ENCODE measurements at regions of chr15 and their contacts with region 1.

Region 1: DNA sequence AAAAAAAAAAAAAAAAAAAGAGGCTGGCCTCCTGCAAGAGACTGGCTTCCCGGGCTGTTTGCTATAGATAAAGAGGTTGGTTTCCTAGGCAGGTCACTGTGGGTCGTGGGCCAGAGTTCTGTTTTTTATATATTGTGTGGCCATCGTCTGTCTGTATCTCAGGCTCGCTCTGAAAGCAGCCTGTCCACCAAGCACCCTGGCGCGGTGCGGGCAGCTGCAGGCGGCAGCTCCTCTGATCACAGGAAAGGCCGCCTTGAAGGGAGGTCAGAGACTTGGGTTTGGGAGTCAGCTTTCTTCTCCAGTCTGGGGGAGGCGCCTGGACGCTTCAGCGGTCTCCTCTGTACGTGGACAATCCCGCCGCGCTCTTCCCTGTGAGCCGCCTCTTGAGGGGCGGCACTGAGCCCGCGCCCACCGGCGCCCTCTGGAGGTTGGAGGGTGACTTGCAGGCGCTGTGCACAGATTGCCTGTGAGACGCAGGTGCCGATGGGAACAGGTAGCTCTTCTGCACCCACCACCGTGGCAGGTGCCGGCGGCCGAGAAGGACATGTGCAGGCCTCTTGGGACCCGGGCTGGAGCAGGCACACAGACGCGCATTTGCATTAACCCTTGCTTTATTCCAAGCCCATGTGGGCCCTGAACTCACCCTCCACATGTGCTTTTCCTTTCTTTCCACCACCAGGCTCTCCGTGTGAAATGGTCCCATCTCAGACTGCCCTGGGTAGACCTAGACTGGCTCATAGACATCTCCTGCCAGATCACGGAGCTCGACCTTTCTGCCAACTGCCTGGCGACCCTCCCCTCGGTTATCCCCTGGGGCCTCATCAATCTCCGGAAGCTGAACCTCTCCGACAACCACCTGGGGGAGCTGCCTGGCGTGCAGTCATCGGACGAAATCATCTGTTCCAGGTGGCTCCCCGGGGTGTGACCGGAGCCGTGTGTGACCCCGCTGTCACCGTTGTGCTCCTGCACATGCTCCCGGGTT is 89.3 kb downstream of the LRRK1 start:
- DNase-seq: no peak
- H3K4me3 ChIP-seq: peak overlapping the region; percentile 59
- CTCF ChIP-seq: peak; percentile 99

Region 2: DNA sequence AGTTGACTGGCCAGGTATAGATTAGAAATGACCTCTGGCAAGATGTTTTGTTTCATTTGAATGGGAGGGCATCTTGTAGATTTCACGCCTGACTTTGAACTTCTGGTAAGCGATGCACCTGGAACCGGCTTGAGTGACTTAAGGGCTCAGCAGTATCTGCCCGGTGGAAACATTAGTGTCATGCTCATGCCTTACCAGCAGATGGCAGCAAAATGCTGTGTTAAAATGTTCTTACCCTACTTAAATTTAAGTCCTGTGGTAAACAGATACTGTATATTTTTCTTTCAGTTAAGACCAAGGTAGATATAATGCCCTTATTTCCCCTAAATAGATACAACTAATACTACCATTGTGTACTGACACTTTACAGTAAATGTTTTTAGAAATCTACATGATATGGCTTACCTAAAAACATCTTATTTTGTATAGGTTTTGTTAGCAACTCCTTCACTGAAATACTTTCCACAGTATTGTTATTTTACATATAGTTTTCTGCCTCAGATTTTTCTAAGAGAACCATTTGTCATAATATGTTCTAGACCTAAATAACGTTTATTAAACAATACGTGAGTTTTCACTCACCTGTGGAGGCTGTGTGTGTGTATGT is 380.6 kb before region 1 on chr15:
- CTCF ChIA-PET with region 1: interaction called, 67 read pairs
- POLR2A ChIA-PET with region 1: no interaction called
- DNase-seq: peak; percentile 52
- H3K4me3 ChIP-seq: no peak overlapping the region
- CTCF ChIP-seq: peak; percentile 58

Region 3: DNA sequence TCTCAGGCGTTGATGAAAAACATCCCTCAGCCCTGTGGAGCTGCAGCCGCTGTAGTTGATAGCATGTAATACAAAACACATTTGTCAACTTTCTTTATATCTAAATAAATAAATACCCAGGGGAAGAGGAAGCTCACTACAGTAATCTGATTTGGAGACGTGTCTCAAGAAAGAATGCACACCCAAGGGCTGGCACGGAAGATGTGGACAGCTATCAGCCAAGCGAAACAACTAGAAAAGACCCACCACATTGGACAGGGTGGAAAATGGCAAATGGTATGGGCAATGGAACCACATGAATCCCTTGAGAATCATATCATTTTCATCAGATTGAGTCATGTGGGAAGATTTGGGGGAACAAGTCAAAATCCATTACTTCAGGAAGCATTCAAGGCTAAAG is 171.9 kb before region 1 on chr15:
- CTCF ChIA-PET with region 1: no interaction called
- POLR2A ChIA-PET with region 1: no interaction called
- DNase-seq: no peak
- H3K4me3 ChIP-seq: no peak overlapping the region
- CTCF ChIP-seq: no peak

Region 4: GRCh38 chr15:100873029-100873677 is 135.3 kb before region 1 on chr15:
- CTCF ChIA-PET with region 1: interaction called, 41 read pairs
- POLR2A ChIA-PET with region 1: no interaction called
- DNase-seq: peak; percentile 73
- H3K4me3 ChIP-seq: no peak overlapping the region
- CTCF ChIP-seq: peak; percentile 78

Region 5: DNA sequence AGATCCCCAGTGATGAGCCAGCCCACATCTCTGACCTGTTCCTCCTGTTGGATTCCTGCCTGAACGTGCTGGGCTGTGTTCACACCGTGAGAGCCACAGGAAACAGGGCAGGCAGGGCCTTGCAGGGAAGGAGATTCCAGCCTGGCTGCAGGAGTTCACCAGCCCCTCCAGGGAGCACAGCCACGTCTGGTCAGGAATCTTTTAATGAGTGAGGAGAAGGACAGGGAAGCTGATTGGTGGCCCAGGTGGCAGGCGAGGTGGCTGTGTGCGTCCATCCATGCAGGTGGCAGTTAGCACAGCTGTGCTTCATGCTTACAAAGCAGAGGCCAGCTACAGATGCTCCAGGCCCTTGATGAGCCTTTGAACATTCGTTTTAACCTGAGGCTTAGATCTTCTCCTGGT is 78.8 kb before region 1 on chr15:
- CTCF ChIA-PET with region 1: interaction called, 757 read pairs
- POLR2A ChIA-PET with region 1: no interaction called
- DNase-seq: no peak
- H3K4me3 ChIP-seq: no peak overlapping the region
- CTCF ChIP-seq: no peak

Region 6: DNA sequence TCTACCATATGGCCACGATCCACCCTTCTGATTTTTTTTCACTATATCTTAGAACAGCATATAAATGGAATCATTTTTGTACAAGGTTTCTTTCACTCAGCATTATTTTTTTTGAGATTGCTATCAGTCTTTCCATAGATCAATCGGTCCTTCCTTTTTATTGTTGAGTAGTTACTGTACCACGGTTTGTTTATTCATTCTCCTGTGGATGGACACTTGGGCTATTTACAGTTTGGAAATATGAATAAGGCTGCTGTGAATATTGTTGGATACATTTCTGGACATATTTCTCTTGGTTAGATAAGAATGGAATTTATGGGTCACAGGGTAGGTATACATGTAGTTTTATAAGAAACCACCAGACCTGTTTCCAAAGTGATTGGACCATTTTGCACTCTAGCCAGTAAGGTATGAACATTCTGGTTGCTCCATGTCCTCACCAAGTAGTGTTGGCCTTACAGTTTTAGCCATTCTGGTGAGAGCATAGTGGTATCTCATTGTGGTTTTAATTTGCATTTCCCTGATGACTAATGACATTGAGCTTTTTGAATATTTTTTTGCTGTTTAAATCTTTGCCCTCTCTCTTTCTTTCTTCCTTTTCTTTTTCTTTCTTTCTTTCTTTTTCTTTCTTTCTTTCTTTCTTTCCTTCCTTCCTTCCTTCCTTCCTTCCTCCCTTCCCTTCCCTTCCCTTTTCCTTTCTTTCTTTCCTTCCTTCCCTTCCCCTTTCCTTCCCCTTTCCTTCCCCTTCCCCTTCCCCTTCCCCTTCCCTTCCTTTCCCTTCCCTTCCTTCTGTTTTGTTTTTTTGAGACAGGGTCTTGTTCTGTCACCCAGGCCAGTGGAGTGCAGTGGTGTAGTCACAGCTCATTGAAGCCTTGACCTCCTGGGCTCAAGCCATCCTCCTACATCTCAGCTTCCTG is 40.1 kb before region 1 on chr15:
- CTCF ChIA-PET with region 1: interaction called, 16 read pairs
- POLR2A ChIA-PET with region 1: no interaction called
- DNase-seq: no peak
- H3K4me3 ChIP-seq: no peak overlapping the region
- CTCF ChIP-seq: no peak

Region 7: GRCh38 chr15:101121511-101122090 is 113.2 kb after region 1 on chr15:
- CTCF ChIA-PET with region 1: no interaction called
- POLR2A ChIA-PET with region 1: no interaction called
- DNase-seq: no peak
- H3K4me3 ChIP-seq: peak overlapping the region; percentile 38
- CTCF ChIP-seq: peak; percentile 58

Region 8: DNA sequence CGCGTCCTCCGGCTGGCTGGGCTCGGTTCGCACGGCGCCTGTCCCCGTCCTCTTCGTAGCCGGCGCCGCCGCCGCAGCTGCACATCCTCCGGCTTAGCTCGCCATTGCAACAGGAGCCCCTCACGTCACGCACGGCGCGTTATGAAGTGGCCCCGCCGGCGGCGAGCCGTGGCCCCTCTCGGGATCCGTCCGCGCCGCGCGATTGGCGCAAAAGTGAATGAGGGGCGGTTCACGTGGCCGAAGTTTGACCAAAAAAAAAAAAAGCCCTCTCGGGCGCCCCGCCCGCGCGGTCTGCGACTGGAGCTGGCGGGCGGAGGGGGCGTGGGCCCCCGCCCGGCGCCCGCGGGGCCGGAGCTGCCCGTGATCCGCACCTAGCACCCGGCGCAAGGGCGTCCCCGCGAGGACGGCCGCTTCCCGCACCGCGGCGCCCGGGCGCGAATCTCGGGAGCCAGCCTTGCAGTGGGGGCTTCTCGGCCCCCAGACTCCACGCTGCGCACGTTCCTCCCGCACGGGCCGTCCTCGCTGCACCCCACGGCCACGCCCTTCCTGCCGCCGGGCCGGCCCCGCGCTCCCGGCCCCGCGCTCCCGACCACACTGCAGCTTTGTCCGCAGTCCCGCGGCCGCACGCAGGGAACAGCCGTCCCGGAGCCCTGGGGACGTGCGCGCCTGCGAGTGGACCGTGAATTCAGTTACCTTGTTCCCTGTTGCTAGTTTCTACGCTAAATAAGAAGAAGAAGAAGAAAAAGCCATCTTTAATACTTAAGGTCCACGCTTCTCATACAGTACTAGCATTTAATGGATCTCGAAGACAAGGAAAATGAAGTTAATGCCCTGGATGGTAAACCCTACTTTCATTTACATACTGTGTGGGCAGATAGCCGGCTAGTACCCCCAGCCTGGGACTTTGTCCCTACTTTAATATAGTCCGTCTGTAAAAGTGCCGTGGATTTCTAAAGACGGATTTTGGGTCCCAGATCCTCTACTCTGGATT is 243.7 kb after region 1 on chr15 and contains the start of gene CHSY1:
- CTCF ChIA-PET with region 1: interaction called, 261 read pairs
- POLR2A ChIA-PET with region 1: no interaction called
- DNase-seq: peak; percentile 46
- H3K4me3 ChIP-seq: peak within 1 kb of the TSS; percentile 72
- CTCF ChIP-seq: peak; percentile 18

Measured in AG04449 (cell line).